Caco-2 (cell line): ENCODE measurements at regions of chr6 and their contacts with region 1.

Region 1: GRCh38 chr6:55069132-55069781 is 105.1 kb upstream of the HCRTR2 start:
- DNase-seq: peak in 1 of 2 experiments; percentile 55
- H3K4me3 ChIP-seq: no peak overlapping the region
- H3K4me3 Mint-ChIP-seq: no peak overlapping the region
- H3K27ac Mint-ChIP-seq: no peak overlapping the region
- H3K4me1 ChIP-seq: no peaks in the 10 kb centered on the region
- H3K4me1 Mint-ChIP-seq: peaks cover 6% of the 10 kb centered on the region
- H3K27me3 ChIP-seq: no peaks in the 10 kb centered on the region
- H3K27me3 Mint-ChIP-seq: peaks cover 4% of the 10 kb centered on the region
- CTCF ChIP-seq: peak; percentile 60 to 74

Region 2: DNA sequence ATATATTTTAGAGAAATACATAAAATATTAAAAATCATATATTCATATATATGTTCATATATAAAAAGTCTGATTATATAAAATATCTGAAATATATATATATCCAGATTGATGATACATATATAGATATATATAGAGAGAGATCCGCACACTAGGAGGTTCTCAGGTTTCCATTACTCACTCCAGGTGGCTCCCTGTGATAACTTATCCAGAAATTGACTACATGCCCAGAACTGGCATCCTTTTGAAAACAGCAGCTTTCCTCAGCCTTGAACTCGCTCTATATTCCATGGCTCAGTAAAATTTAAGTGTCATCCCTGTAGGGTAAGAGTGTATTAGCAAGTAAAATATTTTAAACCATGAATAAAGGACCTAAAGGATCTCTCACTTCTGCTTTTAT is 554.2 kb before region 1 on chr6:
- CTCF ChIA-PET with region 1: no interaction called
- POLR2A ChIA-PET with region 1: no interaction called
- intact Hi-C with region 1: loop called (anchors 1 kb)
- DNase-seq: peak in 1 of 2 experiments; percentile 7
- H3K4me3 ChIP-seq: no peak overlapping the region
- H3K4me3 Mint-ChIP-seq: no peak overlapping the region
- H3K27ac Mint-ChIP-seq: no peak overlapping the region
- H3K4me1 ChIP-seq: no peaks in the 10 kb centered on the region
- H3K4me1 Mint-ChIP-seq: no peaks in the 10 kb centered on the region
- H3K27me3 ChIP-seq: no peaks in the 10 kb centered on the region
- H3K27me3 Mint-ChIP-seq: no peaks in the 10 kb centered on the region
- CTCF ChIP-seq: no peak

Region 3: GRCh38 chr6:54697424-54697823 is 371.8 kb before region 1 on chr6:
- CTCF ChIA-PET with region 1: interaction called, 4 read pairs
- POLR2A ChIA-PET with region 1: no interaction called
- intact Hi-C with region 1: loop called (anchors 1 kb)
- DNase-seq: peak in 1 of 2 experiments; percentile 10
- H3K4me3 ChIP-seq: no peak overlapping the region
- H3K4me3 Mint-ChIP-seq: peak overlapping the region; percentile 10
- H3K27ac Mint-ChIP-seq: peak overlapping the region; percentile 13
- H3K4me1 ChIP-seq: peaks cover 14% of the 10 kb centered on the region
- H3K4me1 Mint-ChIP-seq: peaks cover 8% of the 10 kb centered on the region
- H3K27me3 ChIP-seq: no peaks in the 10 kb centered on the region
- H3K27me3 Mint-ChIP-seq: no peaks in the 10 kb centered on the region
- CTCF ChIP-seq: peak; percentile 31 to 34

Region 4: DNA sequence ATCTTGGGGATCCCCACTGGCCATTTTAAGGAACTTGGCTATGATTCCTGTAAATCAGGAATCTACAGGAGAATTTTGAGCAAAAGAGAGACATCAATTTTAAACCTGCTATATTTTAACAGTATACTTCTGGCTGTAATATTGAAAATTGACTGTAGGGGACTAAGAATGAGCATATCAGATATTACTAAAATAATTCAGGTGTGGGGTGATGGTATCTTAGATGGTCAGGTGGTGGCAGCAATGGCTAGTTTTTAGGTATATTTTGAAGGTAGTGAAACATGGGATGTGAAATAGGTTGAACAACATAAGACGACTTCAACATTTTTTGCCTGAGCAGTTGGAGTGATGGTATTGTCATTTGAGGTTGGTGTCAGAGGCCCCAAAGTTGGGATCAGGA is 190.6 kb before region 1 on chr6:
- CTCF ChIA-PET with region 1: no interaction called
- POLR2A ChIA-PET with region 1: no interaction called
- intact Hi-C with region 1: loop called (anchors 2 kb)
- DNase-seq: no peak
- H3K4me3 ChIP-seq: no peak overlapping the region
- H3K4me3 Mint-ChIP-seq: no peak overlapping the region
- H3K27ac Mint-ChIP-seq: no peak overlapping the region
- H3K4me1 ChIP-seq: peaks cover 51% of the 10 kb centered on the region
- H3K4me1 Mint-ChIP-seq: peaks cover 8% of the 10 kb centered on the region
- H3K27me3 ChIP-seq: no peaks in the 10 kb centered on the region
- H3K27me3 Mint-ChIP-seq: no peaks in the 10 kb centered on the region
- CTCF ChIP-seq: peak in 1 of 2 experiments; percentile 23

Region 5: DNA sequence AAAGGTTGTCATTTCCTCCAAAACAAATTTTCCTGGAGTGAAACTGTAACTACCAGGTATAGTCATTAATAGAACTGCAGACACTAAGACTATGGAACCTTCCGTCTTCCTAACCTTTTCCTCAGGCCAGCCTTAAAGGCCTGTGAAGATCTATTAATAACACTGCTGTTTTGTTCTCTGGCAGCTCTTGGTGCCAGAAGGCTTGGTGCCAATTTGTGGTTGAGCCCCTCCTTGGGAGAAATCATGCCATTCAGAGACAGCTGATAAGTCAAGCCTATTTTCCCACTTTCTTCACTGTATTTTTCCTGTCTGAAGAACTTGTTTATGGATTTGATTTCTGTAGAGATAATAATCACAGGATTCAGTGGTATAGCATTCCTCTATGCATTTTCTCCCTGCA is 169.8 kb after region 1 on chr6:
- CTCF ChIA-PET with region 1: no interaction called
- POLR2A ChIA-PET with region 1: no interaction called
- intact Hi-C with region 1: loop called (anchors 2 kb)
- DNase-seq: no peak
- H3K4me3 ChIP-seq: no peak overlapping the region
- H3K4me3 Mint-ChIP-seq: no peak overlapping the region
- H3K27ac Mint-ChIP-seq: no peak overlapping the region
- H3K4me1 ChIP-seq: no peaks in the 10 kb centered on the region
- H3K4me1 Mint-ChIP-seq: peaks cover 5% of the 10 kb centered on the region
- H3K27me3 ChIP-seq: no peaks in the 10 kb centered on the region
- H3K27me3 Mint-ChIP-seq: no peaks in the 10 kb centered on the region
- CTCF ChIP-seq: no peak